Mucosa of descending colon (tissue), 3 donors: ENCODE measurements at regions of chr7 and their contacts with region 1.

Region 1: GRCh38 chr7:94338921-94339371 is 55.7 kb upstream of the COL1A2 start:
- DNase-seq: no peak
- ATAC-seq: no peak
- H3K4me3 ChIP-seq: no peak overlapping the region
- H3K4me1 ChIP-seq: no peaks in the 10 kb centered on the region
- CTCF ChIP-seq: no peak

Region 2: DNA sequence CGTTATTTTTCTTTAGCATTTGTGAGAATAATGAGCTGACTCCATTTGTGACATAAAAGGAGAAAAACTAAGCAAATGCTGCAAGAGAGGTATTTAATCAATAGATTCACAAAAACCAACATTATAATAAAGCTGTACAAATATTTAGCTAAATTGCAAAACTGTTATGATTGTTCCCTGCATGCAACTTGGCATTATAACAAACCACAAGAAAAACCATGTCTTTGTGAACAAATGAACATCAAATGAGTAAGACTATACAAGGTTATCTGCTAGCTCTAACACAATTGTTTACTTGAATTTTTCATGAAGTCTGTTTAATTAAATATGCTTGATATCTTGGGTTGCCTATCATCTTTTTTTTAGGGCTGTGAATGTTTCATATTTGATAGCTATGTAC is 517.7 kb after region 1 on chr7:
- intact Hi-C with region 1: loop called in 1 of 2 experiments (anchors 10 kb)
- DNase-seq: no peak
- ATAC-seq: no peak
- H3K4me3 ChIP-seq: no peak overlapping the region
- H3K4me1 ChIP-seq: no peaks in the 10 kb centered on the region
- CTCF ChIP-seq: no peak